ENCODE measurements at regions of chr5 and their contacts with region 1.

Region 1: DNA sequence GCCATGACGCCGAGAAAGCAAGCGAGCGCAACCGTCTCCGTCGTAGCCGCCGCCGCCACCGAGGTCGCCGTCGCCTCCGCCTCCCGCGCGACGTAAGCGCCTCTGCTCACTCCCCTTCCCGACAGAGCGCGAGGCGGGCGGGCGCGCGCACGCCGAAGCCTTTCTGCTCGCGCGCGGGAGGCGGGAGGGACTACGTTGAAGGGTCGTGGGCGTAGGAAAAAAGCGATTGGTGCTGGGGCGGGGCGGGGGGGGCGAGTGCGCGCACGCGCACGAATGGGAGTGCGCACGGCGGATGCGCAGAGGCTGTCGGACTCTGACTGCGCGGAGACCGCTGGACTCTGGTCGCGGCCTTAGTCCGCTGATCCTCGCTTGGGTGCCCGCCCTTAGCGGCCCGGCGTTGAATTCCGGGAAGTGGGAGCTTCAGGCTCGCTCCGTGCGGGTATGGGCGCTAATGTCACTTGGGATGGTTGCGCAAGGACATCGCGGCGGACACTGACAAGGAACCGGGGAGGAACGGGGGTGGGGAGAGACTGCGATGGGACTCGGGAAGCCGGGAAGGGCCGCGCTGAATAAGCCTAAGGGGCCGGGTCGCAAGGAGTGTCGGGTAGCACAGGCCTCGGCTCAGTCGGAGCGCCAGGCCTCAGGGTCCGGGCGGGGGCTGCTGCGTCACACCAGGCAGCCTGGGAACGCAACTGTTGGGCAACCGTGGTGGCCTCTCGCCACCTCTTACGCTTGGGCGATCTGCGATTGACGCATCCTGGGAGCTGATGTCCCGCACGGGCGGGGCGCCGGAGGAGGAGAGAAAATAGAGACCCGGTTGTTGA is at the start of gene CHD1:
- DNase-seq: peak; percentile 92
- ATAC-seq: peak; percentile 60
- H3K4me3 Mint-ChIP-seq: peak within 1 kb of the TSS; percentile 99
- H3K27ac Mint-ChIP-seq: peak within 1 kb of the TSS; percentile 100
- H3K4me1 Mint-ChIP-seq: peaks cover 71% of the 10 kb centered on the region
- H3K27me3 Mint-ChIP-seq: no peaks in the 10 kb centered on the region
- CTCF ChIP-seq: no peak
- total RNA-seq, gene CHD1: 65.2 and 77.5 TPM in 2 replicates

Region 2: DNA sequence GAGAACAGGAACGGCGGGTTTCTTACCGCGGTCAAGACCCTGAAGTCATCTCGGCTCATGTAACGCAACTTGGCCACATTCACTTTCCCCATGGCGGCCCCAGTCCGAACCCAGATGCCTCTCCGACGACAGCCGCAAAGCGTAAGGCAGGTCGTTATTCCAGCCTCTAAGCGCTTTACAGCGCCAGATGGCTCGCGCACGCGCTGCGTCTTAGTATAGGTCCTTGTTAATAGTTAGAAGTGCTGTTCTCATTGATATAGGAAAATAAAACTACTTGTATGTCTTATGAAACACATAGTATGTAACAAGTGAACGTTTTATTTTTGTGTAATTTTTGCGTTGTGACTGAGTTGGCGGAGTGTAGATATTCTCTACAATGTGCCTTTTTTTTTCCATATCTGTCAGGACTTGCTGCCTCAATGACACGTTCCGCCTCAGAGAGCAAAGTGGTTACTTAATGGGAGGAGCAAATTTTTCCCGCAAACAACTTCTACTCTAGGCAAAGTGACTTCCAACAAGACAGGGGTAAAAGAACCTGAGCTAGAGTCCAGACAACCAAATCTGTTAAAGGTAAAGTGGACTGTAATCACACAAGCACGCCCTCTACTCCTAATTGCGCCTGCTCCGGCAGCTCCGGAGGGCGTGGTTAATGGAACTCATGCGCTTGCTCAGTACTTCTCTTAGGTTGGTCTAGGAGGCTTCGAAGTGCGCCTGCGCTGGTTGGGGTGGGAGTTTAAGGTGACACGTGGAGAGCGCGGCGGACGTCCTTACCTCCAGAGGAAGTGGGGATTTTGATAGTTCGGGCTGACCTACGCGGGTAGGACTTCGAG is 1745.8 kb before region 1 on chr5 and contains the start of gene RIOK2:
- CTCF ChIA-PET with region 1: no interaction called
- POLR2A ChIA-PET with region 1: interaction called, 3 read pairs
- intact Hi-C with region 1: loop called (anchors 1 kb)
- DNase-seq: peak; percentile 78
- ATAC-seq: peak; percentile 89
- H3K4me3 Mint-ChIP-seq: peak within 1 kb of the TSS; percentile 96
- H3K27ac Mint-ChIP-seq: peak within 1 kb of the TSS; percentile 99
- H3K4me1 Mint-ChIP-seq: peaks cover 34% of the 10 kb centered on the region
- H3K27me3 Mint-ChIP-seq: no peaks in the 10 kb centered on the region
- CTCF ChIP-seq: no peak
- total RNA-seq, gene RIOK2: 38.3 and 41.4 TPM in 2 replicates

Region 3: GRCh38 chr5:97854871-97855762 is 1074.0 kb before region 1 on chr5:
- CTCF ChIA-PET with region 1: no interaction called
- POLR2A ChIA-PET with region 1: no interaction called
- intact Hi-C with region 1: no loop called
- DNase-seq: no peak
- ATAC-seq: no peak
- H3K4me3 Mint-ChIP-seq: no peak overlapping the region
- H3K27ac Mint-ChIP-seq: no peak overlapping the region
- H3K4me1 Mint-ChIP-seq: no peaks in the 10 kb centered on the region
- H3K27me3 Mint-ChIP-seq: no peaks in the 10 kb centered on the region
- CTCF ChIP-seq: no peak

Region 4: DNA sequence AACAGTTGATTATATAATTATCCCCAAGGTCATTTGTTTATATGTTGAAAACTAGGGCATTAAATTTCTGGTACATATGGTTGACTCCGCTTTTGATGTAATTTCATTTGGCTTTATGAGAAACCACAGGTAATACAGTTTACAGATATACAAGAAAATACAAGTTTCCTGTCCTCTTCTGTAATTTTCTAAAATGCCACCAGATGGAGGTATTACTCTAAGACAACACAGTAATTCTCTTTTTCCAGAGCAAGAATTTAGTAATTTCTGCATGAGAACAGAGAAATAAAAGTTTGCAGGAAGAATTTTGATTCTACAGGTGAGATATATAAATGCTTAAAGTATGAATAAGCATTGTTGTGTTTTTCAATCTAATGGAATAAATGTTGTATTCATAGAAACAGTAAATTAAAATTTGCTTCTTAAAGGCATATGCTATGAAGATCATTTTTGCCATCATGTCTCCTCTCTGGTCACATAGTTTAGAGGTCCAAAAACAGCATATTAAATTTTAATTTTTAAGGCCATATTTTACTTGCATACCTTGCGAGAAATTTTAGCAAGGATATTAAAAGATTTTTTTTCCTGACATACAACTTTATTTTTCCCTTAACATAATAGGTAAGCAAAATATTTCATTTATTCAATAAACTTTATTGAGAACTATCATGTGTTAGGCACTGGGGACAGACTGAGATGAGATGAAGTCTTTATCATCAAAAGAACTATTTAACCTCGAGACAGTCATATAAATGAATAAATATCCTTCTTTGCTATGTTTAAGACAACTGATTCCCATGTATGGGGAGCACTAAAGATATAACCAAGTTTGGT is 23.0 kb before region 1 on chr5:
- CTCF ChIA-PET with region 1: interaction called, 4 read pairs
- POLR2A ChIA-PET with region 1: interaction called, 4 read pairs
- intact Hi-C with region 1: loop called (anchors 1 kb)
- DNase-seq: no peak
- ATAC-seq: peak; percentile 69
- H3K4me3 Mint-ChIP-seq: no peak overlapping the region
- H3K27ac Mint-ChIP-seq: peak overlapping the region; percentile 1
- H3K4me1 Mint-ChIP-seq: peaks cover 34% of the 10 kb centered on the region
- H3K27me3 Mint-ChIP-seq: no peaks in the 10 kb centered on the region
- CTCF ChIP-seq: peak; percentile 94

Region 5: DNA sequence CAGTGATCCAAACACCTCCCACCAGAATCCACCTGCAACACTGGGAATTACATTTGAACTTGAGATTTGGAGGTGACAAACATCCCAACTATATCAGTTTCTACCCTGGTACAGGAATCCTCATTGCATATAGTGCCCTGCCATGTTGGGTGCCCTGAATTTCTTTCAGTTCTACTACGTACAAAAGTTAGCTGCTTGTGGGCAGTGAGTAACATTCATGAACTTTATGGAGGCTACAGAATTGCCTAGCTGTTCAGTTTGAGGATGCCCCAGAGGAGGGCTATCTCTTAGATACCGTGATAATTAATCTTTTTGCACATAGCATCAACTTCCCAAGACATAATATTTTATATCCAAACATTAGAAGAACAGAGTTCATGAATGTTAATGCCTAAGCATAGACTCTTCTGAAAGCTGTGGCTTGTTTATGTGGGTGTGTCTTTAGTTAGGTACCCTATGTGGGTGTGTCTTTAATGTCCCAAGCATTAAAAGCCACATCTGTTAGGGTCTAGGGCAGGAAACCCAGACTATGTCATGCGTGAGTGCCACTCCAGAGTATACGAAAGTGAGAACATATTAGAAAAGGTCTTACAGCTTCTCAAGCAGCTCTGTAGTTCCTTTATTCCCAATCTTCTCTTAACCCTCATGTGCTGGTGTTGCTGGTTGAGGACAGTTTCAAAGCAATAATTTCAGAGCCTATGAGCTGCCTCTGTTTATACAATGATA is 46.8 kb after region 1 on chr5:
- CTCF ChIA-PET with region 1: no interaction called
- POLR2A ChIA-PET with region 1: interaction called, 3 read pairs
- intact Hi-C with region 1: loop called (anchors 2 kb)
- DNase-seq: no peak
- ATAC-seq: peak; percentile 78
- H3K4me3 Mint-ChIP-seq: peak overlapping the region; percentile 11
- H3K27ac Mint-ChIP-seq: peak overlapping the region; percentile 32
- H3K4me1 Mint-ChIP-seq: peaks cover 25% of the 10 kb centered on the region
- H3K27me3 Mint-ChIP-seq: no peaks in the 10 kb centered on the region
- CTCF ChIP-seq: no peak

Region 6: GRCh38 chr5:99025298-99026045 is 96.4 kb after region 1 on chr5:
- CTCF ChIA-PET with region 1: interaction called, 5 read pairs
- POLR2A ChIA-PET with region 1: interaction called, 179 read pairs
- intact Hi-C with region 1: loop called (anchors 1 kb)
- DNase-seq: no peak
- ATAC-seq: no peak
- H3K4me3 Mint-ChIP-seq: no peak overlapping the region
- H3K27ac Mint-ChIP-seq: peak overlapping the region; percentile 59
- H3K4me1 Mint-ChIP-seq: peaks cover 58% of the 10 kb centered on the region
- H3K27me3 Mint-ChIP-seq: no peaks in the 10 kb centered on the region
- CTCF ChIP-seq: no peak

Region 7: DNA sequence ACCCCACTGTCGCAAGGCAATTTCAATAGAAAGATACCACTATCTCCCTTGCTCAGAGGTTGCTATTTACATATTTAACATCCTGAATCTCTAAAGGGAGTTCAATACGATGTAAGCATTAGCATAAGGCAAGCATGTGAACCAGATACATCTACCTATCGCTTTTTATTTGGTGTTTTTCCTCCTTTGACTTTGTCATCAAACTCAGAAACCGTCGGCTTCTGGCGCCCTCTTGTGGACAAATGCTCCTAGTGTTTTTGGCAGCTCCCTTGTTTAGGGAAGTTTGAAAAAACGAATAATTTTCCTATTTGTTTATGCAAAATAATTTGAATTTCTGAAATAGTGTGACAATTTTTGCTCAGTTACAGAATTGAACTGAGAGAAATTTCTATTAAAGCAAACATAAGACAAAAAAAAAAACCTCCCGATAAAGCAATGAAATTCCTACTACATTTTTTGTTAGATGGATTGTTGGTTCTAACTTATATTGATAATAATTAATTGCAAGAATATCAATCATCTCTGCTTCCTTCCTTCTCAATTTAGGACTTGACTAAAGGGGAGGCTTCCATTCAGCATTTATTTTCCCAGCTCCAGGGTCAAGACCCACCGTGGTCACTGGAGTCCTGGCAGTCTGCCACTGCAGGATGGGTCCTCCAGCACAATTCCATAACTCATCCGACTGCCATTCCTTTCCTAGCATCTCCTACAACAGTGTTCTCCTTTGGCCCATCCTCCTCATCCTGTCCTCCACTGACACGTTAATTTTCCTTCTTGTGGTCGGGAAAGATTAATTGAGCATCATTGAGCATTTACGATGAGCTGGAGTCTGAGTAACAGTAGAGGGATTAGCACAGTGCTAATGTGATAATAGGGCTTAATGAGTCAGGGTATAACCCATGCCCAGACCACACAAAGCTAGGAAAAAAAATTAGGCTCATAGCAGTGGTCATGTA is 131.5 kb after region 1 on chr5:
- CTCF ChIA-PET with region 1: interaction called, 3 read pairs
- POLR2A ChIA-PET with region 1: interaction called, 4 read pairs
- intact Hi-C with region 1: loop called (anchors 1 kb)
- DNase-seq: peak; percentile 60
- ATAC-seq: peak; percentile 61
- H3K4me3 Mint-ChIP-seq: peak overlapping the region; percentile 60
- H3K27ac Mint-ChIP-seq: peak overlapping the region; percentile 66
- H3K4me1 Mint-ChIP-seq: peaks cover 48% of the 10 kb centered on the region
- H3K27me3 Mint-ChIP-seq: no peaks in the 10 kb centered on the region
- CTCF ChIP-seq: peak; percentile 51